Natural killer cell (primary cell): ENCODE measurements at regions of chr3 and their contacts with region 1.

Region 1: DNA sequence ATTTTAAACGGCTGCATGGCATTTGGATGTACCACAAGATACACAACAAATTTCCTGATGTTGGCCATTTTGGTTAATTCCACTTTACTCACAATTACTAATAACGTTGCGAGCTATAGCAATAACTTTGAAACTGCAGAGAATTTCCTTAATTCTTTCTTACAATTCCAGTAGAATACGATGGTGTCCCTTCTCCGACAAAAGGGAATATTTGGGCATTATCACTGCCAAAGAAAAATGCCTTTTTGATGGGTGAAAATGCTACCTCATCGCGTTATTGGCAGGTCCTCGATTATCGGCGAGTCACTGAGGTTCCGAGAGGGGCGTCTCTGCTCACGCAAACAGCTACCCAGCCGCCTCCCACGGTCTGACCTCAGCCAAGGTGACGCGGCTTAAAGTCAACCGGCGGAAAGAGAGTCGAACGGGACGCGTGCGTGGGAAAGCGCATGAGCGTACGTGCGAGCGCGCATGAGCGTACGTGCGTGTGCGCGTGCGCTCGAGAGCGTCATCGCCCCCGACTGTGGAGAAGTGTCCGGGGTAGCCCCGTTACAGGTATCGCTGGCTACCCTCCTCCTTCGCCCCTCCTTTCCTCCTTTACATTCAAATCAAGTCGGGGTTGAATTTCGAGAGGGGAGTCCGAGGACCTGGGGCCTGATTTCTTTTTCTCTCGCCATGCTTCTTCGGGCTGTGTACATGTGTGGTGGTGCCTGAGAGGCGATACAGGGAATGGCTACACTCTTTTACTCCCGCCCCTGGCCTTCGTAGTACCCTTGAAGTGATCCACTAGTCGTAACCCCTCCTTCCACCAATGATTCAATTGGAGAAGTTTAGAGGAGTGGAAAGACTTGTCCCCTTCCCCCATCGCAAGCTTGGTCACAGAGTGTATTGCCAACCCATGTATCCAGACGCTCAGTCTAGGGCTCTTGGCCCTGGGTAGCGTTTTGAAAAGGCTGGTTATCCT is at the start of gene OXSM:
- DNase-seq: peak; percentile 84 to 98
- ATAC-seq: peak; percentile 90 to 94 (median 92)
- H3K4me3 ChIP-seq: peak within 1 kb of the TSS; percentile 75
- H3K4me3 Mint-ChIP-seq: peak within 1 kb of the TSS; percentile 96
- H3K27ac ChIP-seq: peak within 1 kb of the TSS; percentile 95
- H3K27ac Mint-ChIP-seq: peak within 1 kb of the TSS; percentile 96 to 100
- H3K4me1 ChIP-seq: peaks cover 4% of the 10 kb centered on the region
- H3K4me1 Mint-ChIP-seq: peaks cover 24 to 30% of the 10 kb centered on the region in 2 donors
- H3K27me3 ChIP-seq: no peaks in the 10 kb centered on the region
- H3K27me3 Mint-ChIP-seq: no peaks in the 10 kb centered on the region
- CTCF ChIP-seq: no peak
- total RNA-seq, gene OXSM: 7.3 to 12.2 (median 8.6) TPM

Region 2: DNA sequence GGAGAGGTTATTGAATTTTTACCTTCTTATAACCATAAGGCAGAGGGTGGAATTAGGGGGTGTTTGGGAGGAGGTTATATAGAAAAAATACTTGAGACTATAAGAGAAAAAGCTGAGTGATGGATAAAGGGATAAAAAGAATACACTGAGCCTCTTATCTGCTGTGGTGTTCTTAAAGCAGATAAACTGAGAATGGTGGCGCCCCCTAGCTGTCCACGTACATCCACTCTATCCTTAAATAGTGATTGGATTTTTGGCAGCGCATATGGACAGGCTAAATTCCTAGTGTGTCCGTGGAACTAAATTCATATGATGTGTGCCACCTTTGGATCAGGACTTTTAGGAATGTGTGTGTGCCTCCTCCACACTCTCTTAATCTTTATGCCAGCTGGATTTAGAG is 121.1 kb after region 1 on chr3:
- intact Hi-C with region 1: loop called (anchors 5 kb)
- DNase-seq: peak in 1 of 2 donors; percentile 62
- ATAC-seq: no peak
- H3K4me3 ChIP-seq: no peak overlapping the region
- H3K4me3 Mint-ChIP-seq: peak overlapping the region; percentile 72
- H3K27ac ChIP-seq: peak overlapping the region; percentile 93
- H3K27ac Mint-ChIP-seq: peak overlapping the region; percentile 95 to 98
- H3K4me1 ChIP-seq: peaks cover 12% of the 10 kb centered on the region
- H3K4me1 Mint-ChIP-seq: peaks cover 32 to 33% of the 10 kb centered on the region in 2 donors
- H3K27me3 ChIP-seq: peaks cover 2% of the 10 kb centered on the region
- H3K27me3 Mint-ChIP-seq: peaks cover 0 to 3% of the 10 kb centered on the region in 2 donors
- CTCF ChIP-seq: peak; percentile 12